ENCODE measurements at regions of chr5 and their contacts with region 1.

Region 1: DNA sequence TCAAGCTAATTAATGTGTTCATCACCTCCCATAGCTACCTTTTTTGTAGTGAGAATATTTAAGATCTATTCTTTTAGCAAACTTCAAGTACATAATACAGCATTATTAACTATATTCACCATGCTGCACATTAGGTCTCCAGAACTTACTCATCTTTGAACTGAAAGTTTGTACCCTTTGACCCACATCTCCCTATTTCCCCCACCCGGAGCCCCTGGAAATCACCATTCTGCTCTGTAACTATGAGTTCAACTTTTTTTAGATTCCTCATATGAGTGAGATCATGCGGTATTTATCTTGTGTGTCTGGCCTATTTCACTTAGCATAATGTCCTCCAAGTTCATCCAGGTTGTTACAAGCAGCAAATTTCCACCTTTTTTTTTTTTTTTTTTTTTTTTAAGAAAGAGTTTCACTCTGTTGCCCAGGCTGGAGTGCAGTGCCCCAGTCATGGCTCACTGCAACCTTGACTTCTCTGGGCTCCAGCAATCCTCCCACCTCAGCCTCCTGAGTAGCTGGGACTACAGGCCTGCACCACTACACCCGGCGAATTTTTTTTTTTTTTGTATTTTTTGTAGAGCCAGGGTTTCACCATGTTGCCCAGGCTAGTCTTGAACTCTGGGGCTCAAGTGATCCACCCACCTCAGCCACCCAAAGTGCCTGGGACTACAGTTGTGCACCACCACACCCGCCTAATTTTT is 100.4 kb upstream of the SAP30L start:
- DNase-seq: no peak
- H3K4me3 ChIP-seq: no peak overlapping the region
- H3K27ac ChIP-seq: no peak overlapping the region
- H3K4me1 ChIP-seq: no peaks in the 10 kb centered on the region
- H3K27me3 ChIP-seq: no peaks in the 10 kb centered on the region
- CTCF ChIP-seq: no peak

Region 2: DNA sequence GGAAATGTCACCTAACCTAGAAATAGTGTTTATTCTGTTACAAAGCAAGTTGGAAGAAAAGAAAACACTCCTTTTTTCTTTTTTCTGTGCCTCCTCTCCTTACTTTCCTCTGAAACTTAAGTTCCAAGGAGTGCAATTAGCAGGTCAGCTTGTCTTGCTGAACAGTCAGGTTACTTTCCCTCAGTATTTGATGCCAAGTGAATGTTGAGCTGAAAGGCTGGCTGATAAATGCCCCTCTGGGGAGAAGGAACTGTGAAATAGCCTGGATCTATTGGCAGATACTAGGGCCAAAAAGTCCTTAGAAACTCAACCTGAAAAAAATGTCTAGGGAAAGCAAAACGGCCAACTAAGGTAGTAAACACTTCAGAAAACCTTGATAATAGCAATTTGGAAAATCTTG is 811.3 kb before region 1 on chr5:
- CTCF ChIA-PET with region 1: no interaction called
- POLR2A ChIA-PET with region 1: interaction called, 30 read pairs
- intact Hi-C with region 1: no loop called
- DNase-seq: no peak
- H3K4me3 ChIP-seq: no peak overlapping the region
- H3K27ac ChIP-seq: no peak overlapping the region
- H3K4me1 ChIP-seq: no peaks in the 10 kb centered on the region
- H3K27me3 ChIP-seq: no peaks in the 10 kb centered on the region
- CTCF ChIP-seq: no peak

Region 3: DNA sequence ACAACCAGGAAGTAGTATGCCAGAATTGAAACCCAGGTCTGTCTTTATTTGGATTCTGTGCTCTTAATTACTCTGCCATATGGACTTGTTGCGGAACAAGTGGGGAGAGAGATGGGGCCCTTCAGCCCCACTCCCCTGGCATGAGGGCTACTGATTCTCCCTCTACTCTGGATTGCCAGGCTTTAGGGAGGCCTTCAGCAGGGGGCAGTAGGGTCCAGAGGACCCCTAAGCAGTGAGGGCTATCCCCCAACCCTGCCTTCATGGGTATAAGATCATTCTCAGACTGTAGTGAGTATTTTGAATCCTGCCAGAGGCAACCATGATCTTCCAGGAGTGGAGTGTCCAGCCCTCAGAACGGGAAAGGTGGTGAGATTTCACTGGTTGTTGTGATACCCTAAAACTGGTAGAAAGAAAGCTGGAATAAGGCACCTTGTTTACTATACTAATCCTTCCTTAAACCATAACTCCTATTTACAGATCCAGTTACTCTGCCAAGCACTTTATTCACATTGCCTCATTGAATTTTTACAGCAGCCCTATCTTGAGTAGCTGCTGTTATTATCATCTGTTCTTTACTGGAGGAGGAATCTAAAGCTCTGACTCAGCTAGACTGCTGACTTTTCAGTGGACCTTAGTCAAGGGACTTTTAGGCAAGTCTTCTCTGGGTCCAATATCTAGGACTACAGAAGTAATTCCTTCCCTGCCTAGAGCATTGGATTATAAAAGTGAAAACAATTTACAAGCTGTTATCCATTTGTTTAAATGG is 378.5 kb after region 1 on chr5:
- CTCF ChIA-PET with region 1: no interaction called
- POLR2A ChIA-PET with region 1: interaction called, 11 read pairs
- intact Hi-C with region 1: no loop called
- DNase-seq: no peak
- H3K4me3 ChIP-seq: no peak overlapping the region
- H3K27ac ChIP-seq: no peak overlapping the region
- H3K4me1 ChIP-seq: no peaks in the 10 kb centered on the region
- H3K27me3 ChIP-seq: no peaks in the 10 kb centered on the region
- CTCF ChIP-seq: no peak

Measured in PC-9 (cell line).